Activated naive CD4-positive, alpha-beta T cell treated with anti-CD3 and anti-CD28 coated beads for 36 hours (primary cell): ENCODE measurements at regions of chr21 and their contacts with region 1.

Region 1: DNA sequence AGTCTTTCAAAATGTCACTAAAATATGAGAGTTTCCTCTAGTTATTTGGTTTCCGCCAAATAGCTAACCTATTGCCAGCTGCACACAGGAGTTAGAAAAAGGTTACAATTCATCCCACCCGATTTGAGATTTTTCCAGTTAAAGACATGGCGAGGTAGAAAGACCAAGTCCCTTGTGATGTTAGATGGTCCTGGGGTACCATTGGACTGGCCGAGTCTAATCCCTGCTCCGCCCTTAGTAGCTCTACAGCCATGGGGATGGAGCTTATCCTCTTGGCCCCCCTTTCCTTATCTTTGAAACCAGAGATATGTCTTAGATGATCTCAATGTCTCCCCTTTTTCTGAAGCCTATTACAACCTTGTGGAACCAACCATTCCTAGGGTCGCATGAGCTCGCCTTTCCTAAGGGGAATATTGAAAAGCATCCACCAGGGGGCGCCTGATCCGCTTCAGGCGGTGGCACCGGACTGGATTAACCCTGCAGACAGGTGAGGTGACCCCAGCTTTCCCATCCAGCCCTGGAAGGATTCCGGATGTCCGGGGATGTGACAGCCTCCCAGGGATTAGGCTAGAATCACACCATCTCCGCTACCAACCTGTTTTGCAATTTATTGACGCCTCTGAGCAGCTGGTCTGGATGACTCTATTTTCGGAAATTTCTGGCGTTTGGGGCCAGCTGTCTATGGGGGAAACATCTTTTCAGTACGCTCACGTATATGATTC is 68.3 kb upstream of the SIM2 start:
- DNase-seq: peak; percentile 74
- H3K4me3 Mint-ChIP-seq: no peak overlapping the region
- H3K27ac Mint-ChIP-seq: no peak overlapping the region
- H3K4me1 Mint-ChIP-seq: no peaks in the 10 kb centered on the region
- H3K27me3 Mint-ChIP-seq: no peaks in the 10 kb centered on the region

Region 2: GRCh38 chr21:36516281-36516680 is 114.4 kb before region 1 on chr21:
- CTCF ChIA-PET with region 1: interaction called, 11 read pairs
- intact Hi-C with region 1: no loop called
- DNase-seq: no peak
- H3K4me3 Mint-ChIP-seq: no peak overlapping the region
- H3K27ac Mint-ChIP-seq: no peak overlapping the region
- H3K4me1 Mint-ChIP-seq: peaks cover 2% of the 10 kb centered on the region
- H3K27me3 Mint-ChIP-seq: peaks cover 7% of the 10 kb centered on the region

Region 3: DNA sequence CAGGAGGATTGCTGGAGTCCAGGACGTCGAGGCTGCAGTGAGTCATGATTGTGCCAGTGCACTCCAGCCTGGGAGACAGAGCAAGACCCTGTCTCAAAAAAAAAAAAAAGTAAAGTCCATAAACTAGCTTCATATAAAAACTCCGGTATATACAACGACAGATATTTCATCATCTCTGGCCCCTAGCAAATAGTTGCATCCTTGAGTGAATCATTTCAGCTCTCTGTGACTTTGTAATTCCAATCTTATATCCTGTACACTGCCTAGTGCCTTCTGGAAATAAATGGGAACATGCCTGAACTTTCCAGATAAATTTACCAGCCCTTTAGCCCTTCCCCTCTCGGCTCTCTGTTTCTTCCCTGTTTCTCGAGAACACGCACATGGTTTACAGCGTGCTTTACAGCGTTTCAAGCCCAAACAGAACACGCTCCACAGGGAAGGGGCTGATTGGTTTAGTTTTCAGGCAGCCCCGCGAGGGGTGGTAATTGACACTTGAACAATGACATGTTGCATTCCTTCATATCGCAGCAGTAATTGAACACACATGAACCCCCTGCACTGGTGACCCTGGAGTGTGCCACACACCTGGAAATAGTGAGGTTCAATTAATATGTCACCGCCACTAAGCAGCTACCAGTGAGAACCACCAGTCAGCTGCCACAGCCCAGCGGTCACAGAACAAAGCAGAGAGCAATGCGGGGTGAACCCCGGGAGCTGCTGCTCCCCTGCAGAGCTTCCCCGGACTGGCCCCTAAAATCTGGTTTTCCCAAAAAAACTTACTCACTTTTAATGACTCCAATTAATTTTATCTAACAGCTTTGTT is 32.6 kb after region 1 on chr21:
- CTCF ChIA-PET with region 1: interaction called, 15 read pairs
- intact Hi-C with region 1: no loop called
- DNase-seq: no peak
- H3K4me3 Mint-ChIP-seq: no peak overlapping the region
- H3K27ac Mint-ChIP-seq: no peak overlapping the region
- H3K4me1 Mint-ChIP-seq: no peaks in the 10 kb centered on the region
- H3K27me3 Mint-ChIP-seq: peaks cover 15% of the 10 kb centered on the region

Region 4: DNA sequence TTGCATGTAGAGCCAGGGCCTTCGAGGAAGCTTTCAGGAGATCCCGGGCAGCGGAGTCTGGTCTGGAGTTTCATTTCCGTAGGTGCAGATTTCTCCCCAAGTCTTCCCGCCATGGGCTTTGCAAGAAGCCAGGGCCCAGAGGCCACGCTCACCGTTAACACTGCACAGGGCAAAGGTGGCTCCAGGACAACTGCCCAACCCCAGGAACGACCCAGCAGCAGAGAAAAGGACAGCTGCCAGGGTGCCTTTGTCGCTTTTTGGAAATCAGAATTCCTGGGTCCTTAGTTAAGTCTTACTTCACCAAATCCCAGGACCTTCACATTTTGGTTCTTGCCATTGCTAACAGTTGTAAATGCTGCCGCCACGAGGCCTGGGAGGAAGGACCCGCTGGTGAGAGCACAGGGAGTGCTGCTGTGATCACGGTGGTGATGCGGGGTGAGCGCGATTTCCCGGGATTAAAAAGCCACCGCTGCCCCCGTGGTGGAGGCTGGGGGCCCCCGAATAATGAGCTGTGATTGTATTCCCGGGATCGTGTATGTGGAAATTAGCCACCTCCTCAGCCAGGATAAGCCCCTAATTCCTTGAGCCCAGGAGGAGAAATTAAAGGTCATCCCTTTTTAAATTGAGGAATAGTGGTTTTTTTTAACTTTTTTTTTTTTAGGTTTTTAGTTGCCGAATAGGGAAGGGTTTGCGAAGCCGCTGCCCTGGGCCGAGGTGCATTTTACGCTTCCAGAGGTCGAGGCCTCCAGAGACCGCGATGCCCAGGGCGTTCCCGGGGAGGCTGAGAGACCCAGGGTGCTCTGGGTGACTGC is 76.5 kb after region 1 on chr21:
- CTCF ChIA-PET with region 1: interaction called, 6 read pairs
- intact Hi-C with region 1: loop called (anchors 2 kb)
- DNase-seq: peak; percentile 52
- H3K4me3 Mint-ChIP-seq: no peak overlapping the region
- H3K27ac Mint-ChIP-seq: no peak overlapping the region
- H3K4me1 Mint-ChIP-seq: peaks cover 49% of the 10 kb centered on the region
- H3K27me3 Mint-ChIP-seq: peaks cover 80% of the 10 kb centered on the region

Region 5: GRCh38 chr21:36917471-36918158 is 287.0 kb after region 1 on chr21:
- CTCF ChIA-PET with region 1: interaction called, 12 read pairs
- intact Hi-C with region 1: no loop called
- DNase-seq: no peak
- H3K4me3 Mint-ChIP-seq: no peak overlapping the region
- H3K27ac Mint-ChIP-seq: no peak overlapping the region
- H3K4me1 Mint-ChIP-seq: peaks cover 3% of the 10 kb centered on the region
- H3K27me3 Mint-ChIP-seq: no peaks in the 10 kb centered on the region